Activated CD4-positive, alpha-beta T cell treated with anti-CD3 and anti-CD28 coated beads for 36 hours (primary cell): ENCODE measurements at regions of chr20 and their contacts with region 1.

Region 1: GRCh38 chr20:6767536-6768227 is at the start of gene BMP2:
- DNase-seq: peak; percentile 31
- ATAC-seq: peak; percentile 60
- H3K4me3 Mint-ChIP-seq: no peak within 1 kb of the TSS
- H3K27ac Mint-ChIP-seq: no peak within 1 kb of the TSS
- H3K4me1 Mint-ChIP-seq: peaks cover 5% of the 10 kb centered on the region
- H3K27me3 Mint-ChIP-seq: peaks cover 47% of the 10 kb centered on the region
- total RNA-seq, gene BMP2: not detected

Region 2: DNA sequence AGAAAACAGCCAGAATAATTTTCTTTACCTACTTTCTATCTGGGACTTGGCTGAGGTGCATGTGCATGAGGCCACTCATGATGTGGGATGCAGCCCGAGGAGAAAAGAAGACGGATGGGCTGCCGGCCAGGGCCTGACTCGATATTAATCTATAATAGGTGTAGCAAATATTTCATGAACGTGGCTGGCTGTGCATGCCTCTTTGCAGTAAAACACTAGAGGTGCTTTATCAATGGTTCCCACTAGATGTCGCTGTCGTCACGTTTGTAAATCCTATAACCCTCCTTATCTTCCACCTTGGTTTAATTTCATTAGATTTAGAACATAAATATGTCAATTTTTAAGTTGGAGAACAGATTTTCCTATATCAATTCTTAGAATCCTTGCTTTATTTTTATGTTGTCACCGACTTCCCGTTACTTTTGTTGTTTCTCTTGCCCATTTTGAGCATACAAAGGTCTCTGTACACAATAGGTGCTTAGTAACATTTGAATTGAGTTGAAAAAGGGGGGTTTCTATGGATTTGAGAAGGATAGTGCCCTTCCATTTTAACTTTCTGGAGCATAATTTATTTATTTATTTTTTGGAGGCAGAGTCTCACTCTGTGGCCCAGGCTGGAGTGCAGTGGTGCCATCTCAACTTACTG is 625.2 kb before region 1 on chr20:
- CTCF ChIA-PET with region 1: no interaction called
- POLR2A ChIA-PET with region 1: no interaction called
- intact Hi-C with region 1: loop called in 1 of 2 experiments (anchors 5 kb)
- DNase-seq: peak; percentile 67
- ATAC-seq: peak; percentile 53
- H3K4me3 Mint-ChIP-seq: no peak overlapping the region
- H3K27ac Mint-ChIP-seq: no peak overlapping the region
- H3K4me1 Mint-ChIP-seq: no peaks in the 10 kb centered on the region
- H3K27me3 Mint-ChIP-seq: peaks cover 17% of the 10 kb centered on the region

Region 3: GRCh38 chr20:7094438-7094997 is 326.8 kb after region 1 on chr20:
- CTCF ChIA-PET with region 1: no interaction called
- POLR2A ChIA-PET with region 1: no interaction called
- intact Hi-C with region 1: loop called in 1 of 2 experiments (anchors 5 kb)
- DNase-seq: peak; percentile 40
- ATAC-seq: no peak
- H3K4me3 Mint-ChIP-seq: no peak overlapping the region
- H3K27ac Mint-ChIP-seq: no peak overlapping the region
- H3K4me1 Mint-ChIP-seq: no peaks in the 10 kb centered on the region
- H3K27me3 Mint-ChIP-seq: no peaks in the 10 kb centered on the region

Region 4: DNA sequence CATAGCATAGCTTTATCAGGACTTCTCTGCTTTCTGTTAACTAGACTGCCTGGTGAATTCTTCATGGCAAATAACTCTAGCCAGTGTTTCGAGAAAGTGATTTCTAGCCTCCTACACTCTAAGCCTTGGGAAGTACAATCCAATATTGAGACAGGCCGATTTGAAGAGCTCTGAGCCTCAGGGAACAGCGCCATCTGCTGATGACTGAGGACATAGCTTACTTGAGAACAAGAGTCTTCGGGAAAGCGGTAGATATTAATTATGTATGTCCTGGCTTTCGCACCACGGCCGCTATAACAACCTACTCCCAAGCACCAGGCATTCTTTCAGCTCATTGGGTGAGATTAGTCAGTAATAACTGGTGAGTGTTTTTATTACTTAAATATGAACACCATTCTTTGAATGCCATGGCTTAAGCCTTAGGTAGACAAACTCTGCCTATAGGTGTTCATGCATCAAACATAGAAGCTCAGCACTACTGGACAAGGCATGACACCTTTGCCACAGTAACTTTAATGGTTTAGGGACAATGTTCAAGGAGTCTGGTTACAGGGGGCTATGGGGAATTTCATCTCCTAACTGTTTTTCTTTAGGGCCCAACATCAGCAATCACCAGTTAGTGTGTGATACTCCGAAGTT is 518.4 kb after region 1 on chr20:
- CTCF ChIA-PET with region 1: interaction called, 6 read pairs
- POLR2A ChIA-PET with region 1: no interaction called
- intact Hi-C with region 1: loop called (anchors 2 to 10 kb)
- DNase-seq: peak; percentile 62
- ATAC-seq: no peak
- H3K4me3 Mint-ChIP-seq: no peak overlapping the region
- H3K27ac Mint-ChIP-seq: no peak overlapping the region
- H3K4me1 Mint-ChIP-seq: no peaks in the 10 kb centered on the region
- H3K27me3 Mint-ChIP-seq: no peaks in the 10 kb centered on the region

Region 5: DNA sequence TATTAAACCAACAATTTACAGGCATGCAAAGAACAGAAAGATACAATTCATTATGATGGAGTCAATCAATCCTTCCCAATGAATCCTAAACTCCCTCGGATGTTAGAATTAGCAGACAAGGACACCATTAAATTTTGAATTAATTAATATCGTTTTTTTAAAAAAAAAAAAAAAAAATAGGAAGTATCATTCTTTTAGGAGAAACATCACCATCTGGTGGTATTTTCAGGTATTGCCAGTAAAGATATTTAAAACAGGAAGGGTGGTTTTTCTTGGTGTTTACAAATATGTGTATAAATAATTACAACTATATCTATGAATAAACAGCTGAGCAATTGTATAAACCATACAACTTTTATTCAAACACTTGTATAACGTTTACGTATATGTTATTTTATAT is 608.2 kb after region 1 on chr20:
- CTCF ChIA-PET with region 1: no interaction called
- POLR2A ChIA-PET with region 1: no interaction called
- intact Hi-C with region 1: loop called (anchors 1 to 10 kb)
- DNase-seq: no peak
- ATAC-seq: no peak
- H3K4me3 Mint-ChIP-seq: no peak overlapping the region
- H3K27ac Mint-ChIP-seq: no peak overlapping the region
- H3K4me1 Mint-ChIP-seq: no peaks in the 10 kb centered on the region
- H3K27me3 Mint-ChIP-seq: no peaks in the 10 kb centered on the region

Region 6: DNA sequence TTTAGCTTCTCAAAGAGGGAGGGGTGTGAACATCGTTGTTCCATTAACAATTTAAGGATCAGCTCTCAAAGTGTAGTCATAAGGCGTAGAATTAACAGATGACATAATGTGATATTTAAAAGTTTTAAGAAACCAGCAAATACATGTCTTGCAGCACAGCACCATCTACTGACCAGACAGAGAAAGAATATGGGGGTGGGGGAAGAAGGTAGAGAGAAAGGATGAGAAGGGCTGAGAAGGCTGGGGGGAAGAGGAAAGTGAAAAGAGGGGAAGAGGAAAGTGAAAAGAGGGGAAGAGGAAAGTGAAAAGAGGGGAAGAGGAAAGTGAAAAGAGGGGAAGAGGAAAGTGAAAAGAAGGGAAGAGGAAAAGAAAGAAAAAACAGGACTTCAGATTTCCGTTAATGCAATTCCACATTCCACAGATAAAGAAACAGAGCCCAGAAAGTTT is 1091.7 kb after region 1 on chr20:
- CTCF ChIA-PET with region 1: no interaction called
- POLR2A ChIA-PET with region 1: no interaction called
- intact Hi-C with region 1: loop called in 1 of 2 experiments (anchors 1 kb)
- DNase-seq: peak; percentile 27
- ATAC-seq: no peak
- H3K4me3 Mint-ChIP-seq: no peak overlapping the region
- H3K27ac Mint-ChIP-seq: no peak overlapping the region
- H3K4me1 Mint-ChIP-seq: no peaks in the 10 kb centered on the region
- H3K27me3 Mint-ChIP-seq: peaks cover 13% of the 10 kb centered on the region